ENCODE measurements at regions of chr1 and their contacts with region 1.

Region 1: GRCh38 chr1:226634166-226634588 is 85.6 kb downstream of the STUM start:
- DNase-seq: peak; percentile 81
- ATAC-seq: peak; percentile 72
- H3K4me3 Mint-ChIP-seq: no peak overlapping the region
- H3K27ac Mint-ChIP-seq: peak overlapping the region; percentile 60
- H3K4me1 Mint-ChIP-seq: peaks cover 72% of the 10 kb centered on the region
- H3K27me3 Mint-ChIP-seq: no peaks in the 10 kb centered on the region
- CTCF ChIP-seq: peak; percentile 56

Region 2: DNA sequence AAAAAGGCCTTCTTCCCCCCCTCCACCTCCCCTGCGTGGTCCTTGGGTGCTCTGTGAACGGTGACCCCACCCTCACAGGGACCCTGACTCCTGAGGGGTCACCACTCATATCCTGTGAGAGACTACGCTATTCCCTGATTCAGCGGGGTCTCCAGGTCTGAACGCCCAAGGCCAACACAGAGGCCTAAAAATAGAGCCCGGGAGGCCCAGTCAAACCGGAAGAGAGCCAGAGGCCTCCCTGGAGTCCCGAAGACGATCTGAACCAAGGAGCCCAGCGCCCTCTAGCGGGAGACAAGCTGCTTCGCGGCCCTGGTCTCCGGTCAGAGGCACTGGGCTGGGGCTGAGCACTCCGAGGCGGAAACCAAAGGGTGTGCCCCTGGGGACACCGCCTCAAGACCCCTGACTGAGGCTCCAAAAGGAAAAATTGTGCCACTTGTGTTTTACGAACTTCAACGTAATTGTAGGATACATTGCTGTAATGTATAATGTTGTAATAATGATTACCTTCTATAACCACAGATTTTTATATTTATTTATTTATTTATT is 193.9 kb after region 1 on chr1:
- CTCF ChIA-PET with region 1: interaction called, 91 read pairs
- POLR2A ChIA-PET with region 1: interaction called, 6 read pairs
- intact Hi-C with region 1: loop called (anchors 1 kb)
- DNase-seq: peak; percentile 82
- ATAC-seq: peak; percentile 97
- H3K4me3 Mint-ChIP-seq: peak overlapping the region; percentile 58
- H3K27ac Mint-ChIP-seq: peak overlapping the region; percentile 80
- H3K4me1 Mint-ChIP-seq: peaks cover 37% of the 10 kb centered on the region
- H3K27me3 Mint-ChIP-seq: no peaks in the 10 kb centered on the region
- CTCF ChIP-seq: peak; percentile 67

Region 3: DNA sequence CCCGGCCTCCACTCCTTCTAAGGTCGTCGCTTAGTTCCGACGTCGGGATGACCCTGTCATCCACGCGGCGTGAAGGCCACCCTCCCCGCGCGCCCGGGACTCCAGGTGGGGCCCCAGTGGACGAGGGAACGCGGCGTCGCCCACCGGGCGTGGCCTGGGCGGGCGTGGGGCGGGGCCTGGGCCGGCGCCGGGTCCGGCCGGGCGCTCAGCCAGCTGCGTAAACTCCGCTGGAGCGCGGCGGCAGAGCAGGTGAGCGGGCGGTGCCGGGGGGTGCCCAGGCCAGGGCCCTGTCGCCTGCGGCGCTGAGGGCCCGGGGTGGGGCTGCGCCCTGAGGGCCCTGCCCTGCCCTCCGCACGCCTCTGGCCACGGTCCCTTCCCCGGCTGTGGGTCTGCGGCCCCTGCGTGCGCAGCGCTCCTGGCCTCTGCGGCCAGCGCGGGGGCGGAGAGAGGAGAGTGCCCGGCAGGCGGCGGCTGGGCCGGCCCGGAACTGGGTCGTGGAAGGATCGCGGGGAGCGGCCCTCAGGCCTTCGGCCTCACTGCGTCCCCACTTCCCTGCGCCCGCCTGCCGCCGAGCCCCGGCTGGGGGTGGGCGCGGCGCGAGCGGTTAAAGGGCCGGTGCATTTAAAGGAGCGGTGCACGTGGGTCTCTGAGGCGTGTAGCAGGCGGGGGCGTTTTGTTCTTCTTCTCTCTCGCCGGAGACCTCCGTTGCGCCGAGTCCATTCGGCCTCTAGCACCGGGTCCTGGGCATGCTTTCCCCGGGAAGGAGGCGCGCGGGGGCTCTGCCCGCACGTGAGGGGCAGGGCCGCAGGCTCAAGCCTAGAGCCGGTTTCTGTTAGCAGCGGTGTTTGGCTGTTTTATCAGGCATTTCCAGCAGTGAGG is 236.5 kb after region 1 on chr1 and contains the start of gene PSEN2:
- CTCF ChIA-PET with region 1: no interaction called
- POLR2A ChIA-PET with region 1: no interaction called
- intact Hi-C with region 1: loop called (anchors 5 kb)
- DNase-seq: peak; percentile 80
- ATAC-seq: peak; percentile 96
- H3K4me3 Mint-ChIP-seq: peak within 1 kb of the TSS; percentile 87
- H3K27ac Mint-ChIP-seq: peak within 1 kb of the TSS; percentile 53
- H3K4me1 Mint-ChIP-seq: peaks cover 24% of the 10 kb centered on the region
- H3K27me3 Mint-ChIP-seq: no peaks in the 10 kb centered on the region
- CTCF ChIP-seq: no peak
- total RNA-seq, gene PSEN2: 13.4 and 14.3 TPM in 2 replicates

Measured in activated B cell treated with CpG ODN at 0.5 μM for 24 hours (primary cell).